Left ventricle myocardium inferior (tissue), 1 donor: ENCODE measurements at regions of chr1 and their contacts with region 1.

Region 1: DNA sequence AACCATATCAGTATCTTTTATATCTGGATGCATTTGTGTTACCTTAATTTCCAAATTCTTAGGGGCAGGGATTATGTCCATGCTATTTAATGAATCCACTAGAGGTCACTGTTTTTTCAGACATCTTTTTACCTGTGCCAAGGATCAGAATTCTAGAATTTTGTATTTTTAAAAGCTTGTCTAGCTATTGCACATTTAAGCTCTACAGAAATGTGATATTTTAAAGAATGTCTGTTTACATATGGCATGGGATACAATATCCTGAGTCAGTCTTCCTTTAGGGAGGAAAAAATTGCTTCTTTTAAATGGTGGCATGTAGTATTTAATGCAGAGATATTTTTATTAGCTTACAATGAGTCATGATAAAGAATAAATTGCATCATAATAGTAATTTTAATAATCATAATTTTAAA is 11.3 kb downstream of the RPAP2 start:
- DNase-seq: no peak
- H3K4me3 ChIP-seq: no peak overlapping the region
- H3K27ac ChIP-seq: no peak overlapping the region
- H3K4me1 ChIP-seq: no peaks in the 10 kb centered on the region
- H3K27me3 ChIP-seq: no peaks in the 10 kb centered on the region
- CTCF ChIP-seq: peak; percentile 64

Region 2: DNA sequence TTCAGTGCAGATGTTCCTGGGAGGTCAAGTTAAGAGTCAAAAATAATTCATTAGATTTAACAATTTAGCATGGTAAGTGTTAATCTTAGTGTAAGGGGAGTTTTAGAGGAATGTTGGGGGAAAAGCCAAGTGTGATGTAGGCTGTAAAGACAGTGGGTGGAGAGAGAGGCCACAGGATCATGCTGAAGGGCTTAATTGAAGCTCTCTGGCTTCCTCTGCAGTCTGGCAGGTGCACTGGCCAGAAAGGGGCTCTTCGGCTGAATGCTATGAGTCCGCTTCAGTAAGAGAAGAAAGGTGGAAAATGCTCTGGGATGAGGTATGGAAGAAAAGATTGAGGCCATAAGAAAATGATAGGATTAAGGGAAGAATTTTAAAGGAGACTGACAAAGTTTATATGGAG is 358.0 kb before region 1 on chr1:
- intact Hi-C with region 1: no loop called
- DNase-seq: no peak
- H3K4me3 ChIP-seq: no peak overlapping the region
- H3K27ac ChIP-seq: no peak overlapping the region
- H3K4me1 ChIP-seq: no peaks in the 10 kb centered on the region
- H3K27me3 ChIP-seq: no peaks in the 10 kb centered on the region
- CTCF ChIP-seq: no peak

Region 3: GRCh38 chr1:92623187-92623778 is 313.1 kb after region 1 on chr1:
- intact Hi-C with region 1: loop called (anchors 10 kb)
- DNase-seq: no peak
- H3K4me3 ChIP-seq: no peak overlapping the region
- H3K27ac ChIP-seq: no peak overlapping the region
- H3K4me1 ChIP-seq: no peaks in the 10 kb centered on the region
- H3K27me3 ChIP-seq: no peaks in the 10 kb centered on the region
- CTCF ChIP-seq: peak; percentile 45